ENCODE measurements at regions of chr1 and their contacts with region 1.

Region 1: GRCh38 chr1:206912445-206913095 is 9.2 kb downstream of the FCMR start:
- DNase-seq: peak; percentile 76
- H3K4me3 Mint-ChIP-seq: no peak overlapping the region
- H3K27ac Mint-ChIP-seq: no peak overlapping the region
- H3K4me1 Mint-ChIP-seq: peaks cover 88% of the 10 kb centered on the region
- H3K27me3 Mint-ChIP-seq: no peaks in the 10 kb centered on the region

Region 2: DNA sequence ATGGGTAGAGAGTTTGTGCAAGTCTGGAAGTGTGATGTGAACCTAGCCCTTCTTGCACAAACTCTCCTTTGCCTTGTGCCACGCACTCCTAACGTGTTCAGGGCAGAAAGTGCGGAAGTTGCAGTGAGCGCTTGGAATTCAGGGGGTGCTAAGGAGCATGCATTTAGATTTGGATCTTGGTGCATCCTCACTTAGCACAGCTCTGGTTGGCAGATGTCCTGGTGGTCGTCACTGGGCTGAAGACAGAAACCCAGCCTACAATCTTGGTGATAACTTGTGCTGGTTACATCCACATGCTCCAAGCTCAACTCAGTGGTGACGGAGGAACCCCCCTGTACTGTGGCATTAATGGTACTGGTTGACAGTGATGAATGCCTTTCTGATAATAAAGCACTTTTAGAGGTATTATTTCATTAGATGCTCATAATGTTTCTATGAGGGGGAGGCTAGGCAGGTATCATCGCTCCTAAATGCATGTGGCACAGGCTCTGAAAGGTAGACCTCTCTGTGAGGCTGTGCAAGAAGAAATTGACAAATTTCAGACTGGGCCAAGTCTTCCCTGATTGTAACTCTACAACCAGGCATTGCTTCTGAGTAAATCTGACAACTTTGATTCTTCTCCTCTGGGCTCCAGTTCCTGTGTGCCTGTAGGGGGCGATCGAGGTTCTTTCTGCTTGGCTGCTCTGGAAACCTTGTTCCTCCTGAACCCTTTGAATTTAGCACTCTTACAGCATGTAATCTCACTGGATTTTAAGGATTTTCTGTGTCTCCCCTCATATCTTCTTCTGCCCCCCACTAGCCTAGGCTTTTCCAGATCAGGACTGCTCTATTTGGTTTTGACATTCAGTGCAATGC is 187.2 kb before region 1 on chr1:
- CTCF ChIA-PET with region 1: interaction called, 32 read pairs
- POLR2A ChIA-PET with region 1: no interaction called
- DNase-seq: peak; percentile 76
- H3K4me3 Mint-ChIP-seq: no peak overlapping the region
- H3K27ac Mint-ChIP-seq: peak overlapping the region; percentile 7
- H3K4me1 Mint-ChIP-seq: peaks cover 51% of the 10 kb centered on the region
- H3K27me3 Mint-ChIP-seq: no peaks in the 10 kb centered on the region

Region 3: DNA sequence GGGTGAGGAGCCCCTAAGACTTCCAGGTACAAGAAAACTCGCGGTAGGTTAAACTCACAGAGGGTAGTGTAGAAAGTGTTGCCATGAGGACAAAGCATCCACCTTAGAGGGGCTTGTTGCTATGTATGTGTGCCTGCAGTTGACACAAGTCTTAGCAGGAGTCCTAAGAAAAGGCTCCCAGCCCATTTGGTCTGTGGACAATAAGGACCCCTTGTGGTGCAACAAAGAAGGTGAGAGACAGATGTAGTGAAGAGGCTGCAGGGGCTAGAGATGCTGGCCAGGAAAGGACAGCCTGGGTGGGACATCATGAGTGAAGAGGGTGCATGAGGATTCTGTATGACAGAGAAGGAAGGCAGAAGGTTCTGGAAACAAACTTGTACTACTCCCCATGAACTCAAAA is 104.0 kb before region 1 on chr1:
- CTCF ChIA-PET with region 1: interaction called, 22 read pairs
- POLR2A ChIA-PET with region 1: no interaction called
- DNase-seq: peak; percentile 74
- H3K4me3 Mint-ChIP-seq: no peak overlapping the region
- H3K27ac Mint-ChIP-seq: no peak overlapping the region
- H3K4me1 Mint-ChIP-seq: peaks cover 54% of the 10 kb centered on the region
- H3K27me3 Mint-ChIP-seq: peaks cover 2% of the 10 kb centered on the region

Region 4: DNA sequence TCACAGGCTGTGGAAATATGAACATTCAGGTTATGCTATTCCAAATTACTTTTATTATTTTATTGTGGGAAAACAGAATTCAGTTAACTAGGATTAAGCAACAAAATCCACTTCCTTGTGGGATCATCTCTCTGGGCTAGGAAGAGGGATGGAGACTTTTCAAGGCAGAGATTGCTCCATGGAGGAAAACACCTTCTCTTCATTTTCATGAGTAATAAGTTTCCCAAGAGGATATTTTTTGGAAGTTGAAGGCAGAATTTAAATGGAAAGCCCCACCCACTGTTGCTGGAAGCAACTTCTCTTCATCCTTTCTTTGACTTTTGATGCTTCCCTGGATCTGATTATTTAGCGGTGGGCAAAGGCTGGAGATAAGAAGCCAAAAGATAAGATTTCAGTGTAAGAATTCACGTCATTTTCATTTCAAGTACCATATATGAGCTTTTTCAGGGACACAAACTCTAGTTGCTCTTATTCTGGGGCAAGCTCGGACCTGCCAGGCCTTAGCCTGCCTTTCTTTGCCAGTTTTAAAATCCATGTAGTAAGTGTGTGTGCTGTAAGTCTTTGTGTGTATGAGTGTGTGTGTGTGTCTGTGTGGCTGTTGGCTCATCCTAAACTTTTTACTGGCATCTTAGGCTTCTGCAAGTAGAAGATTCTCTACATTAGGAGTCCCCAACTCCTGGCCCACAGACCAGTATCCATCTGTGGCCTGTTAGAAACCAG is 27.1 kb before region 1 on chr1:
- CTCF ChIA-PET with region 1: interaction called, 12 read pairs
- POLR2A ChIA-PET with region 1: no interaction called
- DNase-seq: no peak
- H3K4me3 Mint-ChIP-seq: no peak overlapping the region
- H3K27ac Mint-ChIP-seq: no peak overlapping the region
- H3K4me1 Mint-ChIP-seq: peaks cover 14% of the 10 kb centered on the region
- H3K27me3 Mint-ChIP-seq: peaks cover 2% of the 10 kb centered on the region

Region 5: DNA sequence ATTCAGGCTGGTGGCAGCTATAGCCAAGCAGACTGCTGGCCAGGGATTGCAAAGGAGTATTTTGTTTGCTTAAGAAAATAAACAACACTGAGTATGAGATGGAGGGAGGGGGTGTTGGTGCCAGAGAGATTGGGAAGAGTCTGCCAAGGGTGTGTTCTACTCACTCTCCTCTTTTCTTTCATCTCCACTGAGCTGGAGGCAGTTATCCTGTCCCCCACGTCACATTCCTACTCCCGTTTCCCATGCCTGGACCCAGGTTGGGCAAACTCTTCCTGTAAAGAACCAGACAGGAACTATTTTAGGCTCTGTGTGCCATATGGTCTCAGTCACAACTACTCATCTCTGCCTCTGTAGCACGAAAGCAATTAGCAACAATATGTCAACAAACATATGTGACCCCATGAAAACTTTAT is 16.7 kb before region 1 on chr1:
- CTCF ChIA-PET with region 1: interaction called, 13 read pairs
- POLR2A ChIA-PET with region 1: no interaction called
- DNase-seq: no peak
- H3K4me3 Mint-ChIP-seq: no peak overlapping the region
- H3K27ac Mint-ChIP-seq: no peak overlapping the region
- H3K4me1 Mint-ChIP-seq: peaks cover 34% of the 10 kb centered on the region
- H3K27me3 Mint-ChIP-seq: no peaks in the 10 kb centered on the region

Region 6: DNA sequence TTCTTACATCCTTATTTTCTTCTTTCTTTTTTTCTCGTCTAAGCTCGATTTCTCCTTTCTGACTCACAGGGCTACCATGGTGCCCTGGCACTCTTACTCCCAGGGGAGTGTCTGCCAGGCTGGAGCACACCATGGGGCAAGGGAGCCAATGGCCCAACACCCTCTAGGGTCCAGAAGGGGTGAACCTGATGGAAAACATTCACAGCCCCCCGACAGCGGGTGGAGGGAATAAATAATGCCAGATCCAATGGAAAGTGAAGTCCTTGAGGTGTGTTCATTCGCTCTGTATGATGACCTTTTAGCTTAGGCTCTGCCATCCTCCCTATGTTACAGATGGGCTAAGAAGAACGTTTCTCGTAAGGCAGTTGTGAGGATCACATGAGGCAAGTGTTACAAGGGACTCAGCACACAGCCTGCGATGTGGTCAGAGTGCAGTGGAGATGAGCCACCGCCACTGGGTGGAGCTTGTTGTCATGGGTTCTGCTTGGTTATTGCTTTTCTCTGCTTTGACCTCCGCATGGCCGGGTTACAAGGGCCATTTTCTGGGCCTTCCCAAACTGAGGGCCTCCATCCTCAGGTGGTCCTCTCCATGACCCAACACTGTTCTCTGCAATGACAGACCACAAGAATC is 12.7 kb after region 1 on chr1:
- CTCF ChIA-PET with region 1: interaction called, 31 read pairs
- POLR2A ChIA-PET with region 1: no interaction called
- DNase-seq: peak; percentile 65
- H3K4me3 Mint-ChIP-seq: no peak overlapping the region
- H3K27ac Mint-ChIP-seq: no peak overlapping the region
- H3K4me1 Mint-ChIP-seq: peaks cover 27% of the 10 kb centered on the region
- H3K27me3 Mint-ChIP-seq: no peaks in the 10 kb centered on the region

Region 7: GRCh38 chr1:206935491-206936067 is 23.0 kb after region 1 on chr1:
- CTCF ChIA-PET with region 1: interaction called, 13 read pairs
- POLR2A ChIA-PET with region 1: interaction called, 5 read pairs
- DNase-seq: peak; percentile 68
- H3K4me3 Mint-ChIP-seq: no peak overlapping the region
- H3K27ac Mint-ChIP-seq: no peak overlapping the region
- H3K4me1 Mint-ChIP-seq: peaks cover 15% of the 10 kb centered on the region
- H3K27me3 Mint-ChIP-seq: no peaks in the 10 kb centered on the region

Region 8: DNA sequence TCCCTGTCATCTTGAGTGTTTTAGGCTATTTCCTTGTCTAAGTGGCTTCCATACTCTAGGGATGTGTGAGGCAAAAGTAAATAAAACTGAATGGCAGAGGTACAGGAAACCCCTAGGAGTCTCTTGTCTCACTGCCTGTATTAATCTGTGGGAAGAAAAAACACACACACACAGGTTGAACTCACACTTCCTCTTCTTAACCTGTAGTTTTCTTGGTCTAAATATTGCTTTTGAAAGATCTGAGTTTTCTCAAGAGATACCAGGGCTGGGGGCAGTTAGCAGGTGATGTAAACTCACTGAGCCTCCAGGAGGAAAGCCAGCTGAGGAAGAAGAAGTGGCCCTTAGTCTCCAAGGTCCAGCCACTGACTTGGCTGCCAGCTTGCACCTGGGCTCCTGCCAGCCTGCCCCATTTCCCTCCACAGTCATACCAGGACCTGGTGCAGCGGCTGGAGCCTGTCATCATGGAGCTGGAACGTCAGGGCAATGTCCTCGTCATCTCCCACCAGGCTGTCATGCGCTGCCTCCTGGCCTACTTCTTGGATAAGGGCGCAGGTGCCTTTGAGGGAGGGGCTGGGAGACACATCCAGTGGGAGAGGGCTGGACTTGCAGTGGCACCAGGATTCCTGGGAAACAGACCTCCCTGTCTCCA is 157.4 kb after region 1 on chr1:
- CTCF ChIA-PET with region 1: no interaction called
- POLR2A ChIA-PET with region 1: no interaction called
- DNase-seq: no peak
- H3K4me3 Mint-ChIP-seq: no peak overlapping the region
- H3K27ac Mint-ChIP-seq: peak overlapping the region; percentile 76
- H3K4me1 Mint-ChIP-seq: peaks cover 37% of the 10 kb centered on the region
- H3K27me3 Mint-ChIP-seq: peaks cover 7% of the 10 kb centered on the region

Measured in activated CD4-positive, alpha-beta T cell treated with anti-CD3 and anti-CD28 coated beads, Interleukin-2, amount 10 ng/mL, durations not matched to agents 7 days and 5 days (primary cell).